Astrocyte of the cerebellum (primary cell): ENCODE measurements at regions of chr5 and their contacts with region 1.

Region 1: GRCh38 chr5:91699429-91699828 is 316.3 kb upstream of the ARRDC3 start:
- DNase-seq: no peak
- H3K4me3 ChIP-seq: no peak overlapping the region
- CTCF ChIP-seq: no peak

Region 2: DNA sequence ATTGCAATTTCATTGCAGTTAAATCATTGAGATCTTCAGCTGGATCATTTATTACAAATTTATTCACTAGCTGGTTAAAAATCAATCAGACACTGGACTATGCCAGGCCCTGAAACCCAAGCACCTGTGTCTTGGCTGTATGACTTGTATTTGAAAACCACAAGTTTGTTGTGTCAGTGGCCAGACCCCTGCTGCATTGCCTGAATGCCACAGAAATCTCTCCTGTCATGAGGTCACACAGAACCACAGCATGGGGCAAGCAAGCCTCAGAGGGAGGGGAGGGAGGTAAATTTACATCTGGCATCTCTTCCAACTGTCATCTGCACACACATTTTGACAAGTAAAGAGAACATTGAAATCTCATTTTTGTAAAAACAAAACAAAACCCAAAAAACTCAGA is 406.3 kb before region 1 on chr5:
- in situ Hi-C with region 1: no loop called
- DNase-seq: peak; percentile 81
- H3K4me3 ChIP-seq: no peak overlapping the region
- CTCF ChIP-seq: no peak

Region 3: GRCh38 chr5:91607675-91608074 is 91.8 kb before region 1 on chr5:
- in situ Hi-C with region 1: loop called (anchors 5 kb)
- DNase-seq: no peak
- H3K4me3 ChIP-seq: no peak overlapping the region
- CTCF ChIP-seq: no peak